ENCODE measurements at regions of chr5 and their contacts with region 1.

Region 1: GRCh38 chr5:174311531-174312269 is 266.2 kb downstream of the NSG2 start:
- DNase-seq: peak in 1 of 2 donors; percentile 77
- ATAC-seq: peak; percentile 79

Region 2: DNA sequence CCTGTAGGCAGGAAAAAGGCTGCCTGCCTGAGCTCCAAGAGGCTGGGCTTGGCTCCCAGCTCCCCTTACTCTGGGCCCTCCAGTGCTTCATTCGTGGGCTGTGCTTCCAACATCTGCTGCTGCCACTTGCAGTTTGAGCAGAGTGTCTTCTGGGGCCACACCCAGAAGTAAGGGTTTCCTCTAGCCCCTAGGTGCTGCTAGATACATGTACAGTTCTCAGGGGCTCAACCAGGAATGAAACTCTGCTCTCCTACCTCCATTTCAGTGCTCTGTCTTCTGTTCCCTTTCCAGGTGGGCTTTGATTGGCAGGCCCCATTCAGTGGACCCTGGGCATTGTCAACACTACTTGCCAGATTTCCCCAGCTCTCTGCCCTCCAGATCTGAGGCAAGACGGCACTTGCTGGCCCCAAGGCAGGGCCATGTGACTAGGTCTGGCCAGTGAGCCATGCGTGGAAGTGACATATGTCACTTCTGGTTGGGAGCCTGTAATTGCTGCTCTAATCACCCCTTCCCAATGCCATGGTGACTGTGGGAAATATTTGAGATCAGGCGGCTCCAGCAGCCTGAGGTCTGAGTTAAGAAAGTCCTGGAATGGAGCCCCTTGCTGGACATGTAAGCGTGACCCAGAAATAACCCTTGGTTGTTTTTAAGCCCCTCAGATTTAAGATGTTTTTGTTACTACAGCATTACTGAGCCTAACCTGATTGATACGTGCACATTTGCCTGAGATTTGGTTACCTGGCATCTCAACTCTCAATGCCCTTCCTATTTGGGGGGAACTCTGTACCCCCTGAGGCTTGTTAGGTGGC is 685.8 kb before region 1 on chr5:
- intact Hi-C with region 1: loop called in 1 of 2 experiments (anchors 10 kb)
- DNase-seq: no peak
- ATAC-seq: no peak

Region 3: DNA sequence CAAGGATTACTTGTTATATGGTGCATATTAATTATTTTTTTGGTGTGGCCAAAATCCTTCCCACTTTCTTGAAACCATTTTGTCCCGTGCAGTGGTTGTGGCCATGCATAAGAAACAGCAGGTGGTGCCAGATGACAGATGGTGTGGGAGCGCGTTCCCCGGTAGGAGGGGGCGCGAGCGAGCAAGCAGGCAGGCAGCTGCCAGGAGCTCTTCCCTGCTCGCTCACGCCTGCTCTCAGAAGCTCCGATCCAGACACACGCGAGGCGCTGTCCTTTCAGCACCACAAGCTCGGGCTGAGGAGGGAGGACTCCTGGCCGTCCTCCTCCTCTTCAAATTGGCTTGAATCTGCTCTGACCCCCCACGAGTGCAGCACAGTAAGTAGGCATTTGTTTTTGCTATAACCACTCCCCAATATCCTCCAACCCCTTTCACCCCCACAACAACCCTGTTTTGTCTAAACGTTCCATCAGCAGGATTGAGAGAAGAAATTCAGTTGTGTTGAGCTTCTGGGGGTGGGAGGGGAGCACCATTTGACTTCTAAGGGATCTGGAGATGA is 266.2 kb before region 1 on chr5 and contains the start of gene NSG2:
- intact Hi-C with region 1: loop called in 1 of 2 experiments (anchors 10 kb)
- DNase-seq: peak; percentile 62 to 74
- ATAC-seq: peak; percentile 96
- total RNA-seq, gene NSG2: 0.95 to 1.4 TPM

Measured in left colon (tissue), 2 donors.